Activated naive CD4-positive, alpha-beta T cell treated with anti-CD3 and anti-CD28 coated beads for 36 hours (primary cell): ENCODE measurements at regions of chr2 and their contacts with region 1.

Region 1: DNA sequence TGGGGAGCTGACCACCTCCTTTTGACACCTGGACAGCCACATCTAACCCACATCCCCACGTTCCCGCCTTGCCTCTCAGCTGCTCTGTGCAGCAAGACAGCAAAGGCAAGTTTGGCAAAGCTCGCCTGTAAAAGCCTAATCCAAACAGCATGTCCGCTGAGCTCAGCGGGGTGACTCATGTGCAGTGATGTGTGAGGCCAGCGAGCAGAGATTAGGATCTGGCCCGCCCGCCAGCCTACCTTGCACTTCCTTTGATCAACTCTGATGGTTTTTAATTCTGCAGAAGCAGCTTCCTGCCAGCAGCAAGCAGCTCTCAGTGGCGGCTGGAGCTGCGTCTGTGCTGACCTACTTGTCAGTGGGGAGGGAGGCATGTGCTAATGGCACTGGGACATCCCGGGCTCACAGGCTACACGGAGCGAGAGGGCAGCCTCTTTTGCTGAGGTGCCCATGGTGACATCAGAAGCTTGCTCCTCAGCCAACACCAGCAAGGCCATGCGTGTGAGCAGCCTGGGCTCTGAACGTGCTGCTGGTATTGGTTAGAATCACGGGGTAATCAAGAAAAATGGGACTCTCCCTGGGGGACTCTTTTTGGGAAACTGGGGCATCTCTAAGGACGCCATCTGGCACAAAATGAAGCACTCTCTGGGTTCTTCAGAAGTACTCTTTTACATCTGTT is 36.0 kb upstream of the EML4 start:
- DNase-seq: peak; percentile 91
- H3K4me3 Mint-ChIP-seq: peak overlapping the region; percentile 72
- H3K27ac Mint-ChIP-seq: peak overlapping the region; percentile 89
- H3K4me1 Mint-ChIP-seq: peaks cover 83% of the 10 kb centered on the region
- H3K27me3 Mint-ChIP-seq: no peaks in the 10 kb centered on the region

Region 2: GRCh38 chr2:41000374-41000773 is 1132.7 kb before region 1 on chr2:
- CTCF ChIA-PET with region 1: no interaction called
- intact Hi-C with region 1: no loop called
- DNase-seq: no peak
- H3K4me3 Mint-ChIP-seq: no peak overlapping the region
- H3K27ac Mint-ChIP-seq: no peak overlapping the region
- H3K4me1 Mint-ChIP-seq: no peaks in the 10 kb centered on the region
- H3K27me3 Mint-ChIP-seq: no peaks in the 10 kb centered on the region

Region 3: GRCh38 chr2:42117923-42118753 is 15.0 kb before region 1 on chr2:
- CTCF ChIA-PET with region 1: interaction called, 6 read pairs
- intact Hi-C with region 1: loop called (anchors 2 kb)
- DNase-seq: no peak
- H3K4me3 Mint-ChIP-seq: no peak overlapping the region
- H3K27ac Mint-ChIP-seq: peak overlapping the region; percentile 63
- H3K4me1 Mint-ChIP-seq: peaks cover 49% of the 10 kb centered on the region
- H3K27me3 Mint-ChIP-seq: no peaks in the 10 kb centered on the region